Mucosa of descending colon (tissue), 3 donors: ENCODE measurements at regions of chr2 and their contacts with region 1.

Region 1: GRCh38 chr2:161586517-161587167 is 37.6 kb upstream of the SLC4A10 start:
- DNase-seq: no peak
- ATAC-seq: no peak
- H3K4me3 ChIP-seq: no peak overlapping the region
- H3K4me1 ChIP-seq: no peaks in the 10 kb centered on the region
- CTCF ChIP-seq: peak; percentile 22

Region 2: GRCh38 chr2:161946489-161947107 is 360.0 kb after region 1 on chr2:
- intact Hi-C with region 1: loop called (anchors 1 to 10 kb)
- DNase-seq: peak in 1 of 3 donors; percentile 22
- ATAC-seq: peak; percentile 33
- H3K4me3 ChIP-seq: no peak overlapping the region
- H3K4me1 ChIP-seq: peaks cover 6% of the 10 kb centered on the region
- CTCF ChIP-seq: peak; percentile 9

Region 3: GRCh38 chr2:162118559-162119031 is 532.0 kb after region 1 on chr2:
- intact Hi-C with region 1: loop called (anchors 5 to 10 kb)
- DNase-seq: no peak
- ATAC-seq: peak; percentile 46
- H3K4me3 ChIP-seq: no peak overlapping the region
- H3K4me1 ChIP-seq: no peaks in the 10 kb centered on the region
- CTCF ChIP-seq: no peak

Region 4: DNA sequence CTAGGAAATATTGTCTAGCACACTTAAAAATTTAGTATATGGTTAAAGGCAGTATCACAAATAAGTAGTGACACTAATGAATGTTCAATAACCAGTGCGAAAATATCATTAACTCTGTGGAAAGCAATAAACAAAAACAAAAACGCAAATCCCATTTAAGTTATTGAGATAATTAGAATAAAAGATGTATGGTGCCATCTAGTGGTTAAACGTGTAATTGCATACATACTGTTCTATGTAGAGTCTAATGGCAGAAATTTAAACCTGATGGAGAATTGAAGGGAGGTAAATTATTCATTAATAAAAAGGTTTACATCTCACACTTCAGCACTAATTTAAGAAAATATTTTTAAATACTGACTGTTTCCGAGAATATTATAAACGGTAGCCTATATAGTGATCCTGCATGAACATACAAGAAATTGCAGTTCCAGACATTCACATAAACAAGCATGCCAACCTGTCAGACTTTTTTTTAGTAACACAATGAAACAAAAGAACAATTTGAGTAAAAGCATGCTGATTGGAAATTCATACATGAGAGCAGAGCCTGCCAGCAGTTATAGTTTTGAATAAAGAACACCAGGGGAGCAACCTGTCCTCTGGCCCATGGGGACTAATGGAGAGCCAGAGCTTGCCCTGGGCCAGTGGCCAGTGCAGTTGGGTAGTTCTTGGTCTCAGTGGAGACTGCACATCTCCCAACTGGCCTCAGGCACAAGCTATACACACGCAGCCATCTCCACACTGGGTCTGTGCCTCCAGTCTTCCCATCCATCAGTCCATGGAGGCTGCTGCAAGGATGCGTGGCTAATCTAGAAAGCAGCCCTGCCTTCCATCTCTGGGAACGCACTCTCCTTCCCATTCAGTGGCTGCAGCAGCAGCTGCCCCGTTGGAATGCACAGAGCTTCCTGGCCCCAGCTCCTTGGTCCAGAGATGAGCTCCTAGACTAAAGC is 537.4 kb after region 1 on chr2:
- intact Hi-C with region 1: loop called (anchors 5 to 10 kb)
- DNase-seq: peak in 1 of 3 donors; percentile 34
- ATAC-seq: peak; percentile 70
- H3K4me3 ChIP-seq: no peak overlapping the region
- H3K4me1 ChIP-seq: no peaks in the 10 kb centered on the region
- CTCF ChIP-seq: peak; percentile 42